ENCODE measurements at regions of chr14 and their contacts with region 1.

Region 1: DNA sequence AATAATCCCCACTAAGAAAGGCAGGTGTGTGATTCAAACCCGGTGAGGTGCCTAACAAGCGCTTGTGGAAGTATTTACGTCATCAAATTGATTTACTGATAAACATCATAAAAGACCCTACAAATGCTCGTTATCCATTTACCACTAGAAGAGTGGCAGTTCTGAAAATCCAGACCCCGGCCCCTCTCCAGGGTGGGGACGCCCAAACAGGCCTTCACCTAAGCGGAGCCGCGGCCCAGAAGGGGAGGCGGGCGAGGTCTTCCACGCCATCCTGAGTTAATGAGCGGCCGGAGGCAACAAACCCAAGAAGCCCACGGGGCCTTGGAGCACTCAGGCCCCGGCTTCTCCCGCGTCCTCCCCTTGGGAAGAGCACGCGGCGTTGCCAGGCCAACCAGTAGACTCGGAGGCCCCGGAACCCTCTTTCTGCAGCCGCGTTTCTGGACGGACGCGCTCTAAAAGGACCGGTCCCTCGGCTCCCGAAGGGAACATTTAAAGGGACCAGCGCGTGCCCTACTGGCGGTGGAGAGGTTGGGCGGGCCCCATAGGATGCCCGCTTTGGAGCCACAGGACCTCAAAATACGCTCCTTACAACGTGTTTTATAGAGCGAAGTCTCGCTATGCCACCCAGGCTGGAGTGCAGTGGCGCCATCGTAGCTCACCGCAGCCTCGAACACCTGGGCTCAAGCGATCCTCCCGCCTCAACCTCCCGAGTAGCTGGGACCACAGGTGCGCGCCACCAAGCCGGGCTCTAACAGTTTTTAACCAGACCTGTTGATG is 3.5 kb downstream of the PTPN21 start:
- DNase-seq: peak; percentile 88
- H3K4me3 Mint-ChIP-seq: peak overlapping the region; percentile 73
- H3K27ac Mint-ChIP-seq: no peak overlapping the region
- H3K4me1 Mint-ChIP-seq: peaks cover 29% of the 10 kb centered on the region
- H3K27me3 Mint-ChIP-seq: no peaks in the 10 kb centered on the region
- CTCF ChIP-seq: peak; percentile 41

Region 2: DNA sequence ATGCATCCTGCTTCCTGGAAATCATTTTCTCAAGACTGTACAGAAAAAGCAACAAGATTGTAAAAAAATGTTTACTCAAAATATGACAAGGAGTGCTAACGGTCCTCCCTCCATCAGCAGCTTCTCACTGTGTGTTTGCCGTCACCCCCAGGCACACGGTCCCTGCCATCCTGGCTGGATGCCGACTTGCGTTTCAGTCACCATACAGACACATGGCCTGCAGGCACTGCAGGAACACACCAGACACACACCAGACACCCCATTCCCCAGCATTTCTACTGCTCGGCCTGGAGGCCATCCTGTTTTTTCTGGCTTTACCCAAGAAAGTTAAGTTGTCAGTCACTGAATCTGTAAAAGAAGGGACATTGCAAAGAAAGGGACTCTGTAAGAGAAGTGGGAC is 239.0 kb before region 1 on chr14:
- CTCF ChIA-PET with region 1: no interaction called
- intact Hi-C with region 1: no loop called
- DNase-seq: no peak
- H3K4me3 Mint-ChIP-seq: no peak overlapping the region
- H3K27ac Mint-ChIP-seq: no peak overlapping the region
- H3K4me1 Mint-ChIP-seq: no peaks in the 10 kb centered on the region
- H3K27me3 Mint-ChIP-seq: no peaks in the 10 kb centered on the region
- CTCF ChIP-seq: no peak

Region 3: DNA sequence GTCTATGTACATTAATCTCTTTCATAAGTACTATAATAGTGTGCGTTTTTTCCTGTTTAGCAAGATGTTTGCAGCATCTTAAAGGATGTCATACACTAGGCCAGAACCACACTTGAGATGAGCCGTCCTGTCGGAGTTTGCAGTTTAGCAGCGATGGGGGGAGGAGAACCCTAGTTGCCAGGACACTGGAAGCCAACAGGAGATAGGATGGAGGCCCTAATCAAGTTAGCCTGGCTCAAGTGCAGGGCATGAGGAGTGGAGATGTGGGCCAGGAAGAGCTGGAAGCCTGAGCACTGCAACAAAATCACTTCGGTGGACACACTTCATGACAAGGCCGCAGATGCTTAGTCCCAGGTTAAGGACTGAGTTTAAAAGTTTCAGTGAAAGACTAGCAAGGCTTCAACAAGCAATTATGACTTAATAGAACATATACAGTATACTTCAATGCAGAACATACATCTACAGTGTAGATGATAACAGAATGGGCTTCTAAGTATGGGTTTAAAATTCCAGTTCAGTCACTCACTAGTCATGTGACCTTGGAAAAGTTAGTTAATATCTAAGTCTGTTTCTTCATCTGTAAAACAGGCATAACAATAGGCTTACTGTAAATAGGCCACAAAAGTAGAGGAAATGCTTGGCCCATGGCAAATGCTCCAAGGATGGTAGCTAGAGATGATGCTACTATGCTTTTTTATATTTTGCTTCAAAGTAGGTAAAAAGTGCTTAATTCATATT is 73.6 kb before region 1 on chr14:
- CTCF ChIA-PET with region 1: no interaction called
- intact Hi-C with region 1: no loop called
- DNase-seq: no peak
- H3K4me3 Mint-ChIP-seq: no peak overlapping the region
- H3K27ac Mint-ChIP-seq: no peak overlapping the region
- H3K4me1 Mint-ChIP-seq: no peaks in the 10 kb centered on the region
- H3K27me3 Mint-ChIP-seq: no peaks in the 10 kb centered on the region
- CTCF ChIP-seq: no peak

Region 4: GRCh38 chr14:88521821-88522220 is 29.5 kb before region 1 on chr14:
- CTCF ChIA-PET with region 1: no interaction called
- intact Hi-C with region 1: loop called (anchors 2 kb)
- DNase-seq: peak; percentile 5
- H3K4me3 Mint-ChIP-seq: no peak overlapping the region
- H3K27ac Mint-ChIP-seq: peak overlapping the region; percentile 92
- H3K4me1 Mint-ChIP-seq: peaks cover 15% of the 10 kb centered on the region
- H3K27me3 Mint-ChIP-seq: no peaks in the 10 kb centered on the region
- CTCF ChIP-seq: no peak

Region 5: GRCh38 chr14:88895116-88895515 is 343.8 kb after region 1 on chr14:
- CTCF ChIA-PET with region 1: no interaction called
- intact Hi-C with region 1: no loop called
- DNase-seq: no peak
- H3K4me3 Mint-ChIP-seq: no peak overlapping the region
- H3K27ac Mint-ChIP-seq: no peak overlapping the region
- H3K4me1 Mint-ChIP-seq: no peaks in the 10 kb centered on the region
- H3K27me3 Mint-ChIP-seq: peaks cover 15% of the 10 kb centered on the region
- CTCF ChIP-seq: no peak